H1 (cell line): ENCODE measurements at regions of chr11 and their contacts with region 1.

Region 1: GRCh38 chr11:43972366-43972765 is 29.9 kb downstream of the C11orf96 start:
- DNase-seq: no peak
- H3K4me3 ChIP-seq: no peak overlapping the region
- H3K27ac ChIP-seq: no peak overlapping the region
- H3K4me1 ChIP-seq: no peaks in the 10 kb centered on the region
- H3K27me3 ChIP-seq: no peaks in the 10 kb centered on the region
- CTCF ChIP-seq: no peak
- EP300 ChIP-seq: no peak
- POLR2A ChIP-seq: no peak
- RAD21 ChIP-seq: no peak

Region 2: DNA sequence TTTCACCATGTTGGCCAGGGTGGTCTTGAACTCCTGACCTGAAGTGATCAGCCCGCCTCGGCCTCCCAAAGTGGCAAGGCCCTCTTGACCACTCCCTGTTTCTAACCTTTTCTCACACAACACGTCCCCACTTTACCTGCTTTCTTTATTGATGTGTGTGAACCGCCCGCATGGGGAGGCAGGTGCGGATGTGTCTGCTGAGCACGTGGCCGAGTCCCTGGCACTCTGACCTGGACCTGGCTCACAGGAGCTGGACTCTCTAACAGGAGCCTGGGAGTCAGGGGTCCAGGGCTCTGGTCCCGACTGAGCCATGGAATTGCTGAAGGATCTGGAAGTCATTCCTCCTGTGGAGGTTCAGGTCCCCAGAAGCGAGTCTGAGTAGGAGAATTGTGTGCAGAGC is 10.1 kb after region 1 on chr11:
- CTCF ChIA-PET with region 1: interaction called, 10 read pairs
- POLR2A ChIA-PET with region 1: no interaction called
- DNase-seq: no peak
- H3K4me3 ChIP-seq: no peak overlapping the region
- H3K27ac ChIP-seq: no peak overlapping the region
- H3K4me1 ChIP-seq: peaks cover 0 to 4% (median 0%) of the 10 kb centered on the region in 4 experiments; a peak in 4 of 7 replicates
- H3K27me3 ChIP-seq: no peaks in the 10 kb centered on the region
- CTCF ChIP-seq: no peak
- EP300 ChIP-seq: no peak
- POLR2A ChIP-seq: no peak
- RAD21 ChIP-seq: no peak

Region 3: DNA sequence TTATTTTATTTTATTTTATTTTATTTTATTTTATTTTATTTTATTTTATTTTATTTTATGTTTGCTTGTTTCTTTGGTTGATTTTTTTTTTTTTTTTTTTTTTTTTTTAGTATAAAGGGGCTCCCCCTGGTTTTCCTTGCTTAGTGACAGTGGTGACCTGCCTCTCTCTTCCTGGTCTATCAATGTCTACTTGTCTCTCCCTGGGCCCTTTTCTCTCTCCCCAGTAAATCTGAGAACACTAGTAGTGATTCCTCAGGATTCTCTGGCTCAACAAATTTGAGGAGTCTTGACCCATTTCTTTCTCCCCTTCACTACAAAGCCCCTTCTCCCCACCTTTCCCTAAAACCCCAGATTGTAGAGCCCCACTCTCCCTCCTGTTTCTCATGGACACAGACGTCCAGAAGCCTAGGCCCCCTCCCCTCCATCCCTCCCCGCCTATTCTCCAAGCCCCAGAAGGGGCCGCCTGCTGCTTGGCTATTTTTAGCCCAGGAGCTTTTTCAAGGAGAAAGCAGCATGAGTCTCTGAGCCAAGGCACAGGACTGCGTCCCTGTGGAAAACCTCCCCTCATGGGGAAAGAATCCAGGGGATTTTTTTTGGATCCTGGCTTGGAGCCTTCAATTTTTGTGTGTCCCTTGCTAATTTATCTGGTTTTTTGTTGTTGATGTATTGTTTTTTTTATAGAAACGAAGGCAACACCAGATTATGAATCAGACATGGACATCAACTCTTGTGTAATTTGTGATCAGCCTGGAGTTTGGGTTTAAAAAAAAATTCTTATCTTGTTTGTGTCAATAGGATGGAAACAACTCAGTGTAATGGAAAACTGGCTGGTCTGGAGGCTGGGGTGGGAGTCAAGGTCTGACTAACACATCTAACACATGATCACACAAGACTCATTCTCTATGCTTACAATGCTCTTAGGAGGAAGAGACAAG is 57.9 kb after region 1 on chr11:
- CTCF ChIA-PET with region 1: no interaction called
- POLR2A ChIA-PET with region 1: no interaction called
- DNase-seq: peak in 1 of 2 experiments; percentile 45
- H3K4me3 ChIP-seq: peak overlapping the region in 1 of 4 experiments; percentile 31; a peak in 1 of 8 replicates
- H3K27ac ChIP-seq: no peak overlapping the region
- H3K4me1 ChIP-seq: peaks cover 0 to 11% (median 4%) of the 10 kb centered on the region in 4 experiments; a peak in 6 of 7 replicates
- H3K27me3 ChIP-seq: no peaks in the 10 kb centered on the region
- CTCF ChIP-seq: no peak
- EP300 ChIP-seq: no peak
- POLR2A ChIP-seq: no peak
- RAD21 ChIP-seq: 0 out of 4 replicates have a peak, but pooled peaks of 1 of the 2 experiments have one; percentile 3

Region 4: DNA sequence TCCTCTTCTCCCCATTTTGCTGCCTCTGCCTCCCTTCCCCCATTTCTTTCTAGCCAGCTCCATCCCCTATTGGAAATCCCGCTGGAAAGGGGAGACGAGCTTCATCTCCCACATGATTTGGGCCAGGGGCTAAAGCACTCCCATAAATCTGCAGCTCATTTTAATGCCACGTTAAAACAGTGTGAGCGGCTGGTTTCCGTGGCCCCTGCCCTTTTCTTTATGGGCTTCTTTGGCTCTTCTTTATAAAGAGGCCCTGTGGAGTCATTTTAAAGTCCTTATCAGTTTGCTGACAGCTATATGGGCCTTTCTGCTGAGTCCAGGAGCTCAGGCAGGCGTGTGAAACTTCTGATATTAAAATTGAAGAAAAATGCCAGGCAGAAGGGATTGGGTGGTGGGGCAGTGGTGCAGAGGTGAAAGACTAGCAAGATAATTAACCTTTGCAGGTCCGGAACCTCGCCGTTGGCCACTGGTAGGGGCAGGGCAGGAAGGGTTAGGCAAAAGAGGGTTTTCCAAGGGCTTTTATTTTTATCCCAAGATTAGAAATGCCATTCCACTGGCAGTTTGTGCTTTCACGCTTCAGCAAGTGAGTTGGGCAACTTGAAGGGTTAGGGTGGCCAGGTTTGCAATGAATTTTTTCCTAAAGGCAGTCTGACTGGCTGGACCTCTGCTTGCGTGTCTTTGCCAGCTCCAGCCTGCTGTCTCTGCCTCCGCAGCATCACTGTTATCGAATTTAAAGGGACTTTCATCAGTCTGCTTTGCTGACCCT is 167.4 kb after region 1 on chr11:
- CTCF ChIA-PET with region 1: no interaction called
- POLR2A ChIA-PET with region 1: no interaction called
- DNase-seq: no peak
- H3K4me3 ChIP-seq: no peak overlapping the region
- H3K27ac ChIP-seq: no peak overlapping the region
- H3K4me1 ChIP-seq: no peaks in the 10 kb centered on the region
- H3K27me3 ChIP-seq: no peaks in the 10 kb centered on the region
- CTCF ChIP-seq: no peak
- EP300 ChIP-seq: no peak
- POLR2A ChIP-seq: no peak
- RAD21 ChIP-seq: no peak